ENCODE measurements at regions of chr2 and their contacts with region 1.

Region 1: GRCh38 chr2:231411831-231412617 is 16.5 kb downstream of the B3GNT7 start:
- DNase-seq: peak; percentile 82 to 91 (median 89)
- H3K4me3 ChIP-seq: peak overlapping the region; percentile 18 to 78 (median 64)
- H3K27ac ChIP-seq: no peak overlapping the region
- H3K4me1 ChIP-seq: peaks cover 0 to 12% (median 6%) of the 10 kb centered on the region in 4 experiments
- H3K27me3 ChIP-seq: peaks cover 0 to 8% (median 5%) of the 10 kb centered on the region in 5 experiments

Region 2: DNA sequence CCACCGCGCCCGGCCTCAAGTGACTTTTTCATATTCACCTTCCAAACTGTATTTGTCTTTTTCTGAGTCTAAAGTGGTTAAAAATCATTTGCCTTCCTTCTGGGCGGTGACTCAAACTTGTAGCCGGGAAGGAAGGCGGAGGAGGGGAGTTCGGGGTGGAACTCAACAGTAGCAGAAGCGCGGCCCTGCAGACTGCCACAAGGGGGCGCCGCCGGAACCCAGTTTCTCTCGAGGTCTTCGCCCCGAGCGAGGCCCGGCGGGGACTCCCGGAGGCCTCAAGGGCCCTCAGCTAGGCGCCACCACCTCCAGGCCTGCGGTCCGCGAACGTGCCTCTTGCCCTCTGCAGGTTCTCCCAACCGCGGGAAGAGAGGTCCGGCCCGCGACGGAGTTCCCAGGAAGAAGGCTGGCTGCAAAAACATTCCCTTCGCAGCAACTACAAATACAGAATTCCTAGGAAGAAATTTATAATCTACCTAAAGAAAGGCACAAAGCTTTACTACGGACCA is 564.1 kb before region 1 on chr2:
- CTCF ChIA-PET with region 1: no interaction called
- POLR2A ChIA-PET with region 1: no interaction called
- DNase-seq: peak; percentile 84 to 93 (median 91)
- H3K4me3 ChIP-seq: peak overlapping the region in 1 of 7 experiments; percentile 10
- H3K27ac ChIP-seq: no peak overlapping the region
- H3K4me1 ChIP-seq: peaks cover 0 to 5% (median 0%) of the 10 kb centered on the region in 4 experiments
- H3K27me3 ChIP-seq: peaks cover 0 to 3% (median 0%) of the 10 kb centered on the region in 5 experiments

Region 3: DNA sequence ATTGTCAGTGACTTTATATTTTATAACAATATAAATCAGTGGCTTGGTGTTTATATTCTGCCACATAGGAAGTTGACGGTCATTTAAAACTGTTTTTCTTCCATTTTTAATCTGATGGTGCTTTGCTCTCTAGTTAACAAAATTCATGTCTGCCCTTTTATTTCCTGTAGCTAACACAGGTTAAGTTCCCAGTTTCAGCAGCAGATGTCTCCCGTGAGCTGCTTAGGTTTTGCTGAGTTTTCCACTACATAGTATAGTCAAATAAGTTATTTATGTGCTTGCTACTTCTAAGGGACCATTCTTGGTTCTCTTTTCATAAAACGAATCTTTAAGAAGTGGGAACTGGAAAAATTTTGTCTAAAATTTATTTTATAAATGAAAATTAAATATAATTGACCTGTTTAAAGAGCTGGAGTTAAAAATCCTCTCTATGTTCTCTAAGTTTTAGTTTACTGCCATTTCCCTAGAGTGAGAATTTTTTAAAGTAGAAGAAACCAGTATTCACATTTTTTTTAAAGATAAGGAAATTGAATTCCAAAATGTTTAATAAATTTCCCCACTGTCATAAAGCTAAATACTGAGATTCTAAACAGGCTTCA is 307.8 kb before region 1 on chr2:
- CTCF ChIA-PET with region 1: interaction called, 27 read pairs
- POLR2A ChIA-PET with region 1: no interaction called
- DNase-seq: peak; percentile 69 to 86 (median 80)
- H3K4me3 ChIP-seq: no peak overlapping the region
- H3K27ac ChIP-seq: no peak overlapping the region
- H3K4me1 ChIP-seq: no peaks in the 10 kb centered on the region
- H3K27me3 ChIP-seq: no peaks in the 10 kb centered on the region

Region 4: GRCh38 chr2:231238689-231239088 is 173.3 kb before region 1 on chr2:
- CTCF ChIA-PET with region 1: interaction called, 25 read pairs
- POLR2A ChIA-PET with region 1: no interaction called
- DNase-seq: peak in 1 of 3 donors; percentile 20
- H3K4me3 ChIP-seq: no peak overlapping the region
- H3K27ac ChIP-seq: no peak overlapping the region
- H3K4me1 ChIP-seq: peaks cover 0 to 9% (median 4%) of the 10 kb centered on the region in 4 experiments
- H3K27me3 ChIP-seq: no peaks in the 10 kb centered on the region

Region 5: DNA sequence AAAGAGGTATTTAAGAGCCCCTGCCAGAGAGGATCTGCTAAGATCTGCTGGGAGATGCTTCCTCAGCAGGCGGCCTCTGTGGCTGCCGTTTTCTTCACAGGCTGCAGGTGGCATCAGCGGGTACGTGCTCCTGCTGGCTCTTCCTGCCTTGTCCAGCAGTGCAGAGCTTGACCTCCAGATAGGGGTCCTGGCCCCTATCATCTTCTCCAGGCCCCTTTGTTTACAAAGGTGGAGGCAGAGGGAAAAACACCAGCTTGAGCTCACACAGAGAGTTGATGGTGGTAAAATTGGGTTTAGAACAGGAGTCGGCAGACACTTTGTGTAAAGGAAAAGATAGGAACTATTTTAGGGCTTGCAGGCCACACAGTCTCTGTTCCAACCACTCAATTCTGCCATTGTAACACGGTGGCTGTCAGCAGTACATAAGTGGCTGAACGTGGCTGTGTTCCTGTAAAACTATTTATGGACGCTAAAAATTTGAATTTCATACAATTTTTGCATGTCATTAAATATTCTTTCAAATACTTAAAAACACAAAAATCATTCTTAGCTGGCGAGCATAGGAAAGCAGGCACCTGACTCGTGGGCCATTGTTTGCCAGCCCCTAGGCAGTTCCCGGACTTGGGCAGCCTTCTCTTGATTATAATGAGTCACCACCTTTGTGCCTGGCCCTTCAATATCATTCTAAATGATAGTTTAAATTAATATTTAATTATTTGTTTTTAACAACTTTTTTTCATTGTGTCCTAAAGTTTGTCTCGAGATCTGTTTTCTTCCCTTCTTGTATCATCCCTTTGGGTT is 114.7 kb before region 1 on chr2:
- CTCF ChIA-PET with region 1: interaction called, 22 read pairs
- POLR2A ChIA-PET with region 1: no interaction called
- DNase-seq: peak in 2 of 3 donors; percentile 48
- H3K4me3 ChIP-seq: no peak overlapping the region
- H3K27ac ChIP-seq: no peak overlapping the region
- H3K4me1 ChIP-seq: peaks cover 10 to 44% (median 28%) of the 10 kb centered on the region in 4 experiments
- H3K27me3 ChIP-seq: no peaks in the 10 kb centered on the region

Region 6: DNA sequence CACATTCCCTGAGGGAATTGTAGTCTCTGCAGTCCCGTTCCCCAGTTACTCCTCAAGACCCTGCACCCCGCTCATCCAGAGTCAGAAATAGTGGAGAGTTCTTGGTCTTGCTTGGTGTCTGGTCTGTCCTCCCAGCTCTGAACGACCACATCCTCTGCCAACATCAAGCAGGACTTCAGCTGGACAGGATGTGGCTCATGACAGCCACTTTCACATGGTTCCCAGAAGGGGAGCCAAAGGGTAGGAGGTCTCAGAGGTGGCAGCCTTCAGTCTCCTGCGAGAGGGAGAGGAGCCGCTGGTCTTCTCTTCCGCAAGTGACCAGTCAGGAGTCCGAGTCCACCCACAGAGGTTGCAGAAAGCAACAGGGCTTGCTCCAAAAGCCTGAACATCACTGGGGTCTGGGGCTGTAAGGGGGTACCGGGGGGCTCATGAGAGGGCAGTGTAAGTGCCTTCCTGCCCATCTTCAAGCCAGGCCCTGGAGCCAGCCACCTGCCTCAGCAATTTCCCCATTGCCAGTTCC is 13.3 kb after region 1 on chr2:
- CTCF ChIA-PET with region 1: interaction called, 27 read pairs
- POLR2A ChIA-PET with region 1: no interaction called
- DNase-seq: no peak
- H3K4me3 ChIP-seq: no peak overlapping the region
- H3K27ac ChIP-seq: no peak overlapping the region
- H3K4me1 ChIP-seq: peaks cover 0 to 2% (median 0%) of the 10 kb centered on the region in 4 experiments
- H3K27me3 ChIP-seq: no peaks in the 10 kb centered on the region

Region 7: DNA sequence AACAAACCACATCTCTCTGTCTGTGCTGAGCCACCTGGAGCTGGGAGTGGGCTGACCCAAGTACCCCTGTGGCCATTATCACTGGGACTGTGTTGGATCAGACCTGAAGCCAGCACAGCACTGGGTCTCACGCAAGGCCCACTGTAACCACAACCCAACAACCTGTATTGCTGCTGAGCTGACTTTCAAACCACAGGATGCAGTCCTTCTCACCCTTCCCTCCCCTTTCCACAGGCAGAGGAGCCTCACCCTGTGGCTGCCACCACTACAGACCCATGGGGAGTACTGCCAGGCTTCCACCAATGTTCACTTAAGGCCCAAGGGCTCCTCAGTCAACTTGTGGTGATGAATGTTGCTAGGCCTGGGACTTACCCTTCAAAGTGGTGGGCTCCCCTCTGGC is 685.2 kb after region 1 on chr2:
- CTCF ChIA-PET with region 1: no interaction called
- POLR2A ChIA-PET with region 1: no interaction called
- DNase-seq: no peak
- H3K4me3 ChIP-seq: no peak overlapping the region
- H3K27ac ChIP-seq: no peak overlapping the region
- H3K4me1 ChIP-seq: no peaks in the 10 kb centered on the region
- H3K27me3 ChIP-seq: no peaks in the 10 kb centered on the region

Measured in common myeloid progenitor, CD34-positive (primary cell).